SK-N-SH (cell line): ENCODE measurements at regions of chr5 and their contacts with region 1.

Region 1: DNA sequence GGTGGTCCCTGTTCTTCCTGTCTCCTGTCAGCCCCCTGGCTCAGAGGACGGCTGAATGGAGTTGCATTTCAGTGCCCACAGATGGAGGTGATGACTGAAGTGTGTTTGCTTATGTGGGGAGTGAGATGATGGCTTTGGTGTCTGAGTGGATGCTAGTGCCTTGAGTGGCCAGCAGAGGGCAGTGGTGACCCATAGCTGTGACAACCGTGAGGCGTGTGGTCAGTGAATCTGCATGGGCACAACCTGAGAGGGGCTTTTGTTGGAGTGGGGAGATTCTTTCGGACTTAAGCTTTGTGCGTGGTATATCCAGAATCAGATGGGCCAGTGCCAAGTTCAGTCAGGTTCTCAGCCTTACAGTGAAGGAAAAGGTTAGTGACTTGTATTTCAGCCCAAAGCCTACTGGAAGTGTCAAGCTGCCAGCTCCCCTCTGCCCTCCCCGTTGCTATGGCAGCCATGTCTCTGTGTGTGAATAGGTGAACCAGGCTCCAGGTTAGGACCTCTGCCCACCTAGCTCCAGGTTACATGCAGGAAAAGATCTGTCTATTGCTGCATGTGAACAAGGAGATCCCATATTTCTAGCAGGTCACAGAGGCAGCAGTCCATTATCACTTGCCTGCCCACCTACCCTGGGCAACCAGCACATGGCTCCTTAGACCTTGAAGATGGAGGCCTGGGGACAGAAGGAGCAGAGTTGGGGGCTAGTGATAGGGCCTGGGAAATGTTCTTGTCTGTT is 14.7 kb upstream of the CXXC5 start:
- DNase-seq: peak; percentile 77
- H3K4me3 ChIP-seq: no peak overlapping the region; a peak in 1 of 4 replicates
- H3K27ac ChIP-seq: peak overlapping the region in 1 of 2 experiments; percentile 12; a peak in 1 of 4 replicates
- H3K4me1 ChIP-seq: peaks cover 29 to 43% of the 10 kb centered on the region in 2 experiments
- H3K27me3 ChIP-seq: no peaks in the 10 kb centered on the region
- CTCF ChIP-seq: peak; percentile 98
- EP300 ChIP-seq: no peak
- RAD21 ChIP-seq: peak; percentile 97

Region 2: GRCh38 chr5:139600336-139600949 is 33.0 kb before region 1 on chr5:
- CTCF ChIA-PET with region 1: interaction called, 19 read pairs
- POLR2A ChIA-PET with region 1: no interaction called
- DNase-seq: no peak
- H3K4me3 ChIP-seq: no peak overlapping the region
- H3K27ac ChIP-seq: 0 out of 4 replicates have a peak overlapping the region, but pooled peaks of 1 of the 2 experiments have one; percentile 9
- H3K4me1 ChIP-seq: peaks cover 0 to 8% of the 10 kb centered on the region in 2 experiments; a peak in 1 of 4 replicates
- H3K27me3 ChIP-seq: no peaks in the 10 kb centered on the region
- CTCF ChIP-seq: no peak
- EP300 ChIP-seq: no peak
- RAD21 ChIP-seq: no peak

Region 3: GRCh38 chr5:139660923-139661814 is 27.7 kb after region 1 on chr5:
- CTCF ChIA-PET with region 1: interaction called, 177 read pairs
- POLR2A ChIA-PET with region 1: interaction called, 17 read pairs
- DNase-seq: peak; percentile 84
- H3K4me3 ChIP-seq: no peak overlapping the region
- H3K27ac ChIP-seq: peak overlapping the region; percentile 96 to 99
- H3K4me1 ChIP-seq: peaks cover 76 to 96% of the 10 kb centered on the region in 2 experiments
- H3K27me3 ChIP-seq: no peaks in the 10 kb centered on the region
- CTCF ChIP-seq: no peak
- EP300 ChIP-seq: peak in 1 of 2 experiments; percentile 69; a peak in 2 of 4 replicates
- RAD21 ChIP-seq: no peak

Region 4: DNA sequence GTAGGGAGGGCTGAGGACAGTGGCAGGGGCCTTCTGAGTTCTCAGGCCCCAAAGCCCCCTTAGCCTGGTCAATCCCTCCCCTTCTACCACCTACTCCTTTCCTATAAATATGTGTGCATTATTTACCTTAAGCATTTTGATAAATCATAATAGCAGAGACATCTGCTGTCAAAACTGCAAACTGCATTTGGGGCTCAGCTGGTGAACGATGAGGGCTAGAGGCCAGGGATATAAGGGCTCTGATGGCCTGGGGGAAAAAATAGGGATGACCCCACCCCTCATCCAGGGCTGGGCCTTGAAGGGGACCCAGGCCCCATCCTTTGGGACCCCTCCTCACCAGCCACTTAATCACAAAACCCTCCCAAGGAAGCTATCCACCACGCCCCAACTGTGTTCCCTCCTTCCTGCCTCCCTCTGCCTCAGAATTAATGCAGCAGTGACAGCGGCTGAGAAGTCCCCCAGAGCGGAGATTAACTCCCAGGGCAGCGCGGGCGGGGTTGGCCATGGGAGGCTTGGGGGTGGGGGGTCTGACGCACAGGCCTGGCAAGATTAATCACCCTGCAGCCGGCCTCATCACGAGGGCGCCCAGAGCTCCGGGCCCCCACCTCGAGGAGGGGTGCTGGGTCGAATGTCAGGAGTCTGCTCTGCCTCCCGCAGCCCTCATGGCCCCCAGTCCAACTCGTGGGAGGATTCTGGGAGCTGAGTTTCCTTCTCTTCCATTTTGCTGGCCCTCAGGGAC is 56.8 kb after region 1 on chr5:
- CTCF ChIA-PET with region 1: interaction called, 310 read pairs
- POLR2A ChIA-PET with region 1: interaction called, 15 read pairs
- DNase-seq: peak; percentile 77
- H3K4me3 ChIP-seq: no peak overlapping the region
- H3K27ac ChIP-seq: peak overlapping the region; percentile 71 to 97
- H3K4me1 ChIP-seq: peaks cover 41 to 75% of the 10 kb centered on the region in 2 experiments
- H3K27me3 ChIP-seq: no peaks in the 10 kb centered on the region
- CTCF ChIP-seq: peak; percentile 64
- EP300 ChIP-seq: peak in 1 of 2 experiments; percentile 61; a peak in 1 of 4 replicates
- RAD21 ChIP-seq: peak; percentile 76

Region 5: DNA sequence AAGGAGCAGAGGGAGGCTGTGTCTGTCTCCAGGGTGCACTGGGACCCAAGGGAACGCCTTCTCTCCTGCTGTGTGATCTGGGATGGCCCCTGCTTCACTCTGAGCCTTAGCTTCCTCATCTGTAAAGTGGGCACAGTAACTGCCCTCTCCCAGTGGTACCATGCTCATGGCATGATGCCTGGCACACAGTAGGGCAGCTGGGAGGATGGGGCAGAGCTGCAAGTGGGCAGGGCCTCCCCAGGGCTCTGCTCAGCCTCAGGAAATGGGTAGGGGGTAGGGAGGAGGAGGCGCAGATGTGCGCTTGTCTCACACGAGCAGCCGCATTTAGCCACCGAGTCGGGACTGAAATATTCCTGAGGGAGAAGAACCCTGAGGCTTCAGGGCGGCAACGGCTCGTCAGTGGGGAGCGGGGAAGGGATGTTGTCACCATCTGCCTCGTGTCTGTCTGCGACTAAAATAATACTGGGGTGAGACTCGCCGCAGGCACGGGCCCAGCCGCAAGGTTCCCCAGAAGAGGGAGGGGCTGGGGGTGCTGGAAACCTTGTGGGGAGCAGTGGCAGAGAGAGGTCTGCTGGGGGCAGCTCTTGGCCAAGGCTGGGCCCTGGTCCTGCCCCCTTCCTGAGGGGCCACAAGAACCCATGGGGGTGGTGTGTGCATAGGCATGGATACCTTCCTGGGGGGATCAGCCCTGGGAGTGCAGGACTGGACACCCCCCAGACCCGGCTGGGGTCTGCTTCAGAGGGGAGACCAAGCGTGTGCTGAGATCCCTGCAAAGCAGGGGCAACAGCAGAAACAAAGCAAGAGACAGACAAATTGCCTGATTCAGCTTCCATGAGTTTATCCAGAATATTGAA is 106.9 kb after region 1 on chr5:
- CTCF ChIA-PET with region 1: interaction called, 12 read pairs
- POLR2A ChIA-PET with region 1: no interaction called
- DNase-seq: no peak
- H3K4me3 ChIP-seq: no peak overlapping the region
- H3K27ac ChIP-seq: no peak overlapping the region
- H3K4me1 ChIP-seq: peaks cover 10 to 16% of the 10 kb centered on the region in 2 experiments; a peak in 2 of 4 replicates
- H3K27me3 ChIP-seq: no peaks in the 10 kb centered on the region
- CTCF ChIP-seq: no peak
- EP300 ChIP-seq: no peak
- RAD21 ChIP-seq: no peak

Region 6: GRCh38 chr5:139765409-139766217 is 132.2 kb after region 1 on chr5:
- CTCF ChIA-PET with region 1: interaction called, 627 read pairs
- POLR2A ChIA-PET with region 1: interaction called, 23 read pairs
- DNase-seq: peak; percentile 93
- H3K4me3 ChIP-seq: peak overlapping the region; percentile 56 to 85
- H3K27ac ChIP-seq: peak overlapping the region in 1 of 2 experiments; percentile 56; a peak in 1 of 4 replicates
- H3K4me1 ChIP-seq: peaks cover 2 to 29% of the 10 kb centered on the region in 2 experiments; a peak in 3 of 4 replicates
- H3K27me3 ChIP-seq: no peaks in the 10 kb centered on the region
- CTCF ChIP-seq: peak; percentile 97
- EP300 ChIP-seq: peak in 1 of 2 experiments; percentile 14; a peak in 1 of 4 replicates
- RAD21 ChIP-seq: peak; percentile 73